ENCODE measurements at regions of chr3 and their contacts with region 1.

Region 1: DNA sequence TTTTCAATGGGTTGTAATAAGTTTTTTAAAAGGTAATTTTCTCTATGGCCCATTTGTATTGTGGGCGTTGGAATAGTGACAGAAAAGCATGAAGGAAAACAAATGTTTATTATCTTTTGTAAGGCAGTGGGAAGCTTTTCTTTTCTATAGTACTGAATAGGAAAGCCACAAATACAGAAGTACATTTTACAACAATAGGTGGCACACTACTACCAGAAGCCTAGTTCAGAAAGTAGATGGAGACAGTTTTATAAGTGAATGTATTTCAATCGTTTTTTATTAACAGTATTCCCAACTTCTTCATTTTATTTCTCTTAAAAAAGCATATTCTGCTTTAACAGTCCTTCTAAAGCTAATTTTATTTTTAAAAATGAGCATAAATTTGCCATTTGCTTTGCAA is 296.7 kb downstream of the PTPRG start:
- DNase-seq: no peak

Region 2: DNA sequence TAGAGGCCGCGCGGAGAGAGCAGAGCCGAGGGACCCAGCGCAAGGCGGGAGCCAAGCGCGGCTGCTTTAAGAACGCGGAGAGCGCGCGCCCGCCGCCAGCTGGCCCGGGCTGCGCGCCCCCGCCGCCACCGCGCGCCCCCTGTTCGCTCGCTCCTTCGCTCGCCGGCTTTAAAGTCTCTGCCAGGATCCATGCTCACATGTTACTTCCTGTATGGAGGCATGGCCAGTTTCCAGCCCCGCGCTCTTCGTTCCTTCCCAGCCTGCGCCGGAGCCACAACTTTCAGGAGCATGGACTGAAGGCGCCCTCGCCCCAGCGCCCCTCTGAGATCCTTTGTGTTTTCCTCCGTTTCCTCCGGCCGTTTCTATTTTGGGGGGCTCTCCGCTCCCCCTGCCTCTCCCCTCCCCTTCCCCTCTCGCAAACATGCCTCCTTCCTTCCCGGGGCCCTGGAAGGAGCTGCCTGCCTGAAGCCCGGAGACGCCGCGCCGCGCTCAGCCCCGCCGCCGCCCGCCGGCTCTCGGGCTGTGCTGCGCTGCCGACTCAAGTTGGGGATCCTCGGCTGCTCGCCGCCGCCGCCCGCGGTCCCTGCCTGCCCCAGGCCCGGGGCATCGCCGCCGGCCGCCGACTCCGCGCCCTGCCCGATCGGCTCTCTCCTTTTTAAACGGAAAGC is 296.5 kb before region 1 on chr3 and contains the start of gene PTPRG:
- intact Hi-C with region 1: loop called (anchors 10 kb)
- DNase-seq: peak; percentile 50 to 96 (median 75)

Measured in posterior cingulate gyrus (tissue), 11 donors.